B cell (primary cell): ENCODE measurements at regions of chr6 and their contacts with region 1.

Region 1: GRCh38 chr6:136282906-136283305 is 6.7 kb downstream of the BCLAF1 start:
- DNase-seq: no peak
- ATAC-seq: no peak
- H3K4me3 ChIP-seq: no peak overlapping the region
- H3K4me3 Mint-ChIP-seq: peak overlapping the region; percentile 60
- H3K27ac ChIP-seq: peak overlapping the region in 1 of 2 donors; percentile 16
- H3K27ac Mint-ChIP-seq: no peak overlapping the region
- H3K4me1 ChIP-seq: peaks cover 43 to 68% of the 10 kb centered on the region in 2 donors
- H3K4me1 Mint-ChIP-seq: peaks cover 76% of the 10 kb centered on the region
- H3K27me3 ChIP-seq: no peaks in the 10 kb centered on the region
- H3K27me3 Mint-ChIP-seq: no peaks in the 10 kb centered on the region
- CTCF ChIP-seq: no peak

Region 2: DNA sequence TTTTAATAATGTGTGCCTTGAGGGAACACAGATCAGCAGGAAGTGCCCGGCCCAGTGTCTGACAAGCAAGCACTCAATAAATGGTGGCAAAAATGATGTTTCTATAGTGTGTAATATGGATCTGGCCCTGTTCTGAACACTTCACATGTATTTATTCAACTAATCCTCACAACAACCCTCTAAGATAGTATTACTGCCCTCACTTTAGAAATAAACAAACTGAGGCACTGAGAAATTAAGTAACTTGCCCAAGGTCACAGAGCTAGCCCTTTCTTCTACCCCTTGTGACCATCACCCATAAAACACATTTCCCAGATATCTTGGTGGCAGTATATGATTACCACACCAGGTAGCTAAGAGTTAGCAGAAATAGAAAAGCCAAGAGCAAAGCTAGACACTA is 20.0 kb before region 1 on chr6:
- CTCF ChIA-PET with region 1: no interaction called
- POLR2A ChIA-PET with region 1: no interaction called
- intact Hi-C with region 1: loop called (anchors 2 kb)
- DNase-seq: no peak
- ATAC-seq: no peak
- H3K4me3 ChIP-seq: no peak overlapping the region
- H3K4me3 Mint-ChIP-seq: no peak overlapping the region
- H3K27ac ChIP-seq: no peak overlapping the region
- H3K27ac Mint-ChIP-seq: no peak overlapping the region
- H3K4me1 ChIP-seq: no peaks in the 10 kb centered on the region
- H3K4me1 Mint-ChIP-seq: no peaks in the 10 kb centered on the region
- H3K27me3 ChIP-seq: no peaks in the 10 kb centered on the region
- H3K27me3 Mint-ChIP-seq: no peaks in the 10 kb centered on the region
- CTCF ChIP-seq: no peak

Region 3: DNA sequence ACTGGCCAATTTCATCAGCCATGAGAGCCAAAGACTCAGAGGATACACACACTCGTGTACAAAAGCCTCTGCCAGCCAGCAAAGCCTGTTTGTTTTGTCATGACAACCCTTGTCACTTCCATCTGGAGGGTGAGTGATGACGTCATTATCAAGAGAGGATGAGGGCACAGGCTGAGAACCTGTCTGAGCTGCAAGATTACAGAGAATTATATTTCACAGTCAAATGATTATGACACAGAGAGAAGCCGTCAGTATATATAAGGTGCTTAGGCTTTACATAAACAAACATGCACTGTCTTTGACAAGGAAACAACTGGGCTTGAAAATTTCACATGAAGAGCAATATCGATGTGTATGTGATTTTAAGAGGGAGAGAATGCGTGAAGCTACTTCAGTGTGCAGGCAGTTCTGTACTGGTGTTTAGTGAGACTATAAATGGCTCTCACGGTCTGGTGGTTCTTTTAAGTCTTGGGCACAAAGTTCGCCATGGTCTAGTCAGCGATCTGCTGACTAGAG is 43.2 kb after region 1 on chr6:
- CTCF ChIA-PET with region 1: no interaction called
- POLR2A ChIA-PET with region 1: no interaction called
- intact Hi-C with region 1: no loop called
- DNase-seq: no peak
- ATAC-seq: no peak
- H3K4me3 ChIP-seq: no peak overlapping the region
- H3K4me3 Mint-ChIP-seq: no peak overlapping the region
- H3K27ac ChIP-seq: no peak overlapping the region
- H3K27ac Mint-ChIP-seq: no peak overlapping the region
- H3K4me1 ChIP-seq: no peaks in the 10 kb centered on the region
- H3K4me1 Mint-ChIP-seq: no peaks in the 10 kb centered on the region
- H3K27me3 ChIP-seq: no peaks in the 10 kb centered on the region
- H3K27me3 Mint-ChIP-seq: no peaks in the 10 kb centered on the region
- CTCF ChIP-seq: no peak